ENCODE measurements at regions of chr7 and their contacts with region 1.

Region 1: DNA sequence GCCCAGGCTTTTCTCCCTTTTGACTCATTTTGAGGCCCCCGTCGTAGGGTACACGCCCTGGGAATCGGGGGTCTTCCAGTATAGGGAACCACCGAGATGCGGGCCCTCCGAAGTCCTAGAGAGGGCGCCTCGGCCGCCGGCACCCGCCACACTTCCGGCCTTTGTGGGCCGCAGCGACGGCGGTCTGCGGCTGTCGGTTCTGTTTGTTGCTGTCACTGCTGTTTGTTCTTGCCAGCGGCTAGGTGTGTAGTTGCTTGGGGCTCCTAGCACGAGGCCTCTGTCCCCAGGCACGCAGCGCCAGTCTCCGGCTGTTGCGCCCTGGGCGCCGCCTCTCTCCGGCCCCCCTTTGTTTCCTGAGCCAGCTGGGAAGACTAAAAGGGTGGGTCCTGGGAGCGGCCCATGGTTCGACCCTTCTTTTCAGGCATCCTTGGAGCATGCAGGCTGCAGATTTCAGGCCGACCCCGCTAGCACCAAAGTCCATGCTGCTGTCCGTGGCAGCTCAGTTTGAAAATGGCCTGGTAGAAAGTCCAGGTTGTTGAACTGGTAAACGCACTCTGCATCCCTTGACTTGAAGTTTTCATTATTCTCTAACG is 17.8 kb upstream of the ZKSCAN1 start:
- DNase-seq: no peak

Region 2: DNA sequence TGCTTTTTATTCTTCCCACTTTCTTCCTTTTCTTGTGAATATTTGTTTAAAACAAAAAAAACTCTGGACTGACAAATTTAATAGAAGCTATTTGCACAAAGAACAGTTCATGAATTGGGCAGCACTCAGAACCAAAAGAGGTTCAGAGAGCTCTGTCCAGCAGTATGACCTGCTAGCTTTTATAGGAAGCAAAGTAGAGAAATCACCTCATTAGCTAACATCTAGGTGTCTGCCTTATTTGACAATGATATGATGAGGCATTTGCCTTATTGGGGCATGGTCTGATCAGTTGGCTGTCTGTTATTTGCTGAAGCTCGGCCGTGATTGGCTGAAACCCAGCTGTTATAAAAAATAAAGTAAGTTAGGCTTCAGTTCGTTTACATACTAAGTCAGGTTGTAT is 77.5 kb before region 1 on chr7:
- in situ Hi-C with region 1: loop called (anchors 5 kb)
- DNase-seq: no peak

Measured in SK-MEL-5 (cell line).